Caco-2 (cell line): ENCODE measurements at regions of chr12 and their contacts with region 1.

Region 1: GRCh38 chr12:109804820-109805761 is 28.1 kb downstream of the TRPV4 start:
- DNase-seq: peak; percentile 67 to 77
- H3K4me3 ChIP-seq: no peak overlapping the region
- H3K4me3 Mint-ChIP-seq: no peak overlapping the region
- H3K27ac Mint-ChIP-seq: no peak overlapping the region
- H3K4me1 ChIP-seq: no peaks in the 10 kb centered on the region
- H3K4me1 Mint-ChIP-seq: no peaks in the 10 kb centered on the region
- H3K27me3 ChIP-seq: no peaks in the 10 kb centered on the region
- H3K27me3 Mint-ChIP-seq: peaks cover 4% of the 10 kb centered on the region
- CTCF ChIP-seq: peak; percentile 94 to 98

Region 2: GRCh38 chr12:109844983-109845823 is 40.1 kb after region 1 on chr12:
- CTCF ChIA-PET with region 1: interaction called, 43 read pairs
- POLR2A ChIA-PET with region 1: no interaction called
- intact Hi-C with region 1: loop called (anchors 1 kb)
- DNase-seq: peak; percentile 82 to 93
- H3K4me3 ChIP-seq: peak overlapping the region; percentile 15; the same call in 1 of the 2 replicates
- H3K4me3 Mint-ChIP-seq: peak overlapping the region; percentile 14
- H3K27ac Mint-ChIP-seq: no peak overlapping the region
- H3K4me1 ChIP-seq: no peaks in the 10 kb centered on the region
- H3K4me1 Mint-ChIP-seq: no peaks in the 10 kb centered on the region
- H3K27me3 ChIP-seq: no peaks in the 10 kb centered on the region
- H3K27me3 Mint-ChIP-seq: no peaks in the 10 kb centered on the region
- CTCF ChIP-seq: peak; percentile 94 to 96

Region 3: DNA sequence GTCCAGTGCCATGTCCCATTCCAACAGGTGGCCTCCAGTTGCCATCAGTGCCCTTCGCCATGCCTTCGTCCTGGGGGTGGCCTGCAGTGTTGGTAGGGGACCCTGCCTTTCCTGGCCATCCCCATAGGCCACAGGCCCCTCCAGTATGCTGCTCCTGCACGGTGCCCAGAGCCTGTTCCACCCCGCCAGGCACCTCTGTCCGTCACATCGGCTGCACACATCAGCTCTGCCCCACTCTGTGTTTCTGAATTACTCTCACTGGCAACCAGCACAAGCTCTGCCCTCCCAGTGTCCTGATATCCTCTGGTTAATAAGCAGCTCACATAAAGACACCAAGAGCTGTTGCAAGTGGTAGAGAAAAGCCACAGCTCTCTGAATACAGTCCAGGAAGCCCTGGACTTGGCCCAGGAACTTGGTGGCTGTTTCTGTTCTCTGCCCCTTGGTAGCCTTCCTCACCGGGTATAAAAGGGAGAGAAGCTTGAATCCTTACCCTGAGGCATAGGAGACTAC is 444.7 kb after region 1 on chr12:
- CTCF ChIA-PET with region 1: no interaction called
- POLR2A ChIA-PET with region 1: no interaction called
- intact Hi-C with region 1: no loop called
- DNase-seq: no peak
- H3K4me3 ChIP-seq: no peak overlapping the region
- H3K4me3 Mint-ChIP-seq: no peak overlapping the region
- H3K27ac Mint-ChIP-seq: peak overlapping the region; percentile 86
- H3K4me1 ChIP-seq: peaks cover 64% of the 10 kb centered on the region
- H3K4me1 Mint-ChIP-seq: peaks cover 47% of the 10 kb centered on the region
- H3K27me3 ChIP-seq: no peaks in the 10 kb centered on the region
- H3K27me3 Mint-ChIP-seq: no peaks in the 10 kb centered on the region
- CTCF ChIP-seq: no peak